B cell (primary cell): ENCODE measurements at regions of chr9 and their contacts with region 1.

Region 1: DNA sequence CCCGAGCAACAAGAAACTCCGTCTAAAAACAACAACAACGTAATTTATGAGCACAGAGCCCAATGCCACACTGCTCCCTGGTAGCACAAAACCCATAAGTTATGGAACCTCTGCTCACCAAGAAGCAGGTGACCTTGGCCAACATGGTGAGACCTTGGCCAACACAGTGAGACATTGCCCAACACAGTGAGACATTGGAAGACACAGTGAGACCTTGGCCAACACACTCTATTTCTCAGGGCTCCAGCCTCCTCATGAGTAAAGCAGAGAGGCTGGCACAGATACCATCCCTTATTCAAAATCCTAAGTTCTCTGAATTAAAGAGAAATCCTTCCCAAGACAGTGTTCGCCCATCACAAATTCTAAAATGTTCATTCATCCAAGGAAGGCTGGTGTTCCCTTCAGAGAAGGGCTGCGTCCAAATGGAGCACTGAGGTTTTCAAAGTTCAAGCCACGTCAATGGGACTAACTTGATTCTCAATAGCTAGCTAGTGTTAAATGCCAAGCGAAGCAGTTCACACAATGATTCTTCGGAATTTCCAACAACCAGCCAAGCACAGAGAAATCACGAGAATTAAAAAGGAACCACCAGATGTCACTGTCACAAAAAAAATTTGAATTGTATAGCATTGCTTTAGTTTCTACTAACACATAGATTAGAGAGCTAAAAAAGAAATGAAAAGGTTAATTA is 29.5 kb downstream of the TTC39B start:
- DNase-seq: peak; percentile 54
- ATAC-seq: no peak
- H3K4me3 ChIP-seq: no peak overlapping the region
- H3K4me3 Mint-ChIP-seq: no peak overlapping the region
- H3K27ac ChIP-seq: no peak overlapping the region
- H3K27ac Mint-ChIP-seq: no peak overlapping the region
- H3K4me1 ChIP-seq: peaks cover 0 to 3% of the 10 kb centered on the region in 2 donors
- H3K4me1 Mint-ChIP-seq: peaks cover 6% of the 10 kb centered on the region
- H3K27me3 ChIP-seq: no peaks in the 10 kb centered on the region
- H3K27me3 Mint-ChIP-seq: no peaks in the 10 kb centered on the region
- CTCF ChIP-seq: peak; percentile 71

Region 2: DNA sequence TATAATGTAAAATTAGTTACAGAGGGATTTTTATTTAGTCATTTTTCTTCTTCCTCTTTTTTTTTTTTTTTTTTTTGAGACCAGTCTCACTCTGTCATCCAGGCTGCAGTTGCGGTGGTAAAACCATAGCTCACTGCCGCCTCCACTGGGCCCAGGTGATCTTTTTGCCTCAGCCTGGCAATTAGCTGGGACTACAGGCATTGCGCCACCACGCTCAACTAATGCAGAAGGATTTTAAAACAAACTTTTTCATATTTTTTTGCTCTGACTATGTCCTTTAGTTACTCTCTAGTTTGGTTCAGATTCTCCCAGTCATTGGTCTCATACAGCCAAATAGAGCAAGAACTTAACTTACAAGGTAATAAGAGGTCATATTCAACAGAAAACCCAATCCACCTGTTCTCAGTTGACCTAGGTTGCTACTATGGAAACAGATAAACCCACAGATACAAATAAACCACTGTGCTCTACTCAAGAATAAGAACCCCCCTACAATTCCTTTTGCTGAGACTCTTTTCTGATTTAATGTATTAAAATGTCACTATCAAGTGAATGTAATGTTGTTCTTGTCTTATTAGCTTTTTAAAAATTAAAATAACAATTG is 79.6 kb after region 1 on chr9:
- CTCF ChIA-PET with region 1: interaction called, 5 read pairs
- POLR2A ChIA-PET with region 1: no interaction called
- intact Hi-C with region 1: loop called (anchors 2 kb)
- DNase-seq: peak; percentile 76
- ATAC-seq: peak; percentile 78
- H3K4me3 ChIP-seq: no peak overlapping the region
- H3K4me3 Mint-ChIP-seq: no peak overlapping the region
- H3K27ac ChIP-seq: no peak overlapping the region
- H3K27ac Mint-ChIP-seq: no peak overlapping the region
- H3K4me1 ChIP-seq: peaks cover 0 to 8% of the 10 kb centered on the region in 2 donors
- H3K4me1 Mint-ChIP-seq: peaks cover 7% of the 10 kb centered on the region
- H3K27me3 ChIP-seq: no peaks in the 10 kb centered on the region
- H3K27me3 Mint-ChIP-seq: no peaks in the 10 kb centered on the region
- CTCF ChIP-seq: peak; percentile 44

Region 3: GRCh38 chr9:15416880-15417279 is 139.3 kb after region 1 on chr9:
- CTCF ChIA-PET with region 1: interaction called, 10 read pairs
- POLR2A ChIA-PET with region 1: no interaction called
- intact Hi-C with region 1: loop called (anchors 1 kb)
- DNase-seq: peak; percentile 47
- ATAC-seq: no peak
- H3K4me3 ChIP-seq: no peak overlapping the region
- H3K4me3 Mint-ChIP-seq: no peak overlapping the region
- H3K27ac ChIP-seq: no peak overlapping the region
- H3K27ac Mint-ChIP-seq: no peak overlapping the region
- H3K4me1 ChIP-seq: peaks cover under 1 to 1% of the 10 kb centered on the region in 2 donors
- H3K4me1 Mint-ChIP-seq: no peaks in the 10 kb centered on the region
- H3K27me3 ChIP-seq: no peaks in the 10 kb centered on the region
- H3K27me3 Mint-ChIP-seq: peaks cover 8% of the 10 kb centered on the region
- CTCF ChIP-seq: peak; percentile 48